Activated CD8-positive, alpha-beta T cell treated with anti-CD3 and anti-CD28 coated beads for 36 hours (primary cell): ENCODE measurements at regions of chr17 and their contacts with region 1.

Region 1: GRCh38 chr17:50087246-50087911 is 7.8 kb upstream of the PDK2 start:
- DNase-seq: peak; percentile 84
- ATAC-seq: peak; percentile 92
- H3K4me3 Mint-ChIP-seq: no peak overlapping the region
- H3K27ac Mint-ChIP-seq: no peak overlapping the region
- H3K4me1 Mint-ChIP-seq: no peaks in the 10 kb centered on the region
- H3K27me3 Mint-ChIP-seq: no peaks in the 10 kb centered on the region
- CTCF ChIP-seq: peak; percentile 100

Region 2: GRCh38 chr17:50020841-50021599 is 66.4 kb before region 1 on chr17:
- CTCF ChIA-PET with region 1: interaction called, 140 read pairs
- POLR2A ChIA-PET with region 1: no interaction called
- intact Hi-C with region 1: loop called (anchors 1 kb)
- DNase-seq: no peak
- ATAC-seq: no peak
- H3K4me3 Mint-ChIP-seq: no peak overlapping the region
- H3K27ac Mint-ChIP-seq: no peak overlapping the region
- H3K4me1 Mint-ChIP-seq: no peaks in the 10 kb centered on the region
- H3K27me3 Mint-ChIP-seq: peaks cover 12% of the 10 kb centered on the region
- CTCF ChIP-seq: no peak

Region 3: DNA sequence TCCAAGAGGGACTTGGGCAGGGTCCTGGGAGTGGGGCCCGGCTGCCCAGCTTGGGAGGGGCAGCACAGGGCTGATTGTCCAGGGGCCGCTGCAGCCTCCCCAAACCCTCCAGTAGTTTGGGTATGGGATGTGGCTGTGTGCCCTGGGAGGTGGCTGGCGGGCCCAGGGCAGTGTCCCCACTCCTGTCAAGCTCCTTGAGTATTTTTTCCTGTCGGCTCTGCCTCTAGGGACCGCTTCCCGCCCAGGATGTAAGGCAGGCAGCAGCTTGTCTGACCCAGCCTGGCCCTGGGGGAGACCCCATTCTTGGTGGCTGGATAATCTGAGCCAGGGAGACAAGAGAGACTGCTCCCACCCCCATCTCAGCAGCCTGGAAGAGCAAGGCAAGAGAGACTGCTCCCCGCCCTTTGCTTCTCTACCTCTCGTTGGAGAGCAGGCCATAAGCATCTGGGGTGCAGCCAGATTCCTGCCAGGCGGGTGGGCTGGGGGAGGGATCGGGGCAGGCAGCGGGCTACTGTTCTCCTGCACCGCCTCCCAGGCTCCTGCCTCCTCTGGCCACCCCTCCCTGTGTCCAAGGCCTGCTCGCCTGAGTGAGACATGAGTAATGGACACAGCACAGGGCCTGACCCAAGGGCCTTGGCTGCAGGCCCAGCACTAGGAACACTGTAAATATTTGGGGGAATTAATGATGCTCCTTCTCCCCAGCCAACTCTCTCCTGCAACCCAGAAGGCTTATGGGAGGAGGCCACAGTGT is 49.9 kb before region 1 on chr17:
- CTCF ChIA-PET with region 1: interaction called, 140 read pairs
- POLR2A ChIA-PET with region 1: interaction called, 3 read pairs
- intact Hi-C with region 1: no loop called
- DNase-seq: no peak
- ATAC-seq: no peak
- H3K4me3 Mint-ChIP-seq: no peak overlapping the region
- H3K27ac Mint-ChIP-seq: no peak overlapping the region
- H3K4me1 Mint-ChIP-seq: no peaks in the 10 kb centered on the region
- H3K27me3 Mint-ChIP-seq: no peaks in the 10 kb centered on the region
- CTCF ChIP-seq: no peak

Region 4: GRCh38 chr17:50102164-50102991 is 15.0 kb after region 1 on chr17:
- CTCF ChIA-PET with region 1: interaction called, 19 read pairs
- POLR2A ChIA-PET with region 1: interaction called, 3 read pairs
- intact Hi-C with region 1: no loop called
- DNase-seq: no peak
- ATAC-seq: no peak
- H3K4me3 Mint-ChIP-seq: no peak overlapping the region
- H3K27ac Mint-ChIP-seq: no peak overlapping the region
- H3K4me1 Mint-ChIP-seq: peaks cover 11% of the 10 kb centered on the region
- H3K27me3 Mint-ChIP-seq: no peaks in the 10 kb centered on the region
- CTCF ChIP-seq: no peak

Region 5: GRCh38 chr17:50161023-50161910 is 73.9 kb after region 1 on chr17:
- CTCF ChIA-PET with region 1: interaction called, 37 read pairs
- POLR2A ChIA-PET with region 1: interaction called, 3 read pairs
- intact Hi-C with region 1: no loop called
- DNase-seq: peak; percentile 96
- ATAC-seq: peak; percentile 92
- H3K4me3 Mint-ChIP-seq: peak overlapping the region; percentile 65
- H3K27ac Mint-ChIP-seq: peak overlapping the region; percentile 97
- H3K4me1 Mint-ChIP-seq: peaks cover 44% of the 10 kb centered on the region
- H3K27me3 Mint-ChIP-seq: no peaks in the 10 kb centered on the region
- CTCF ChIP-seq: peak; percentile 84

Region 6: GRCh38 chr17:50177983-50178834 is 90.8 kb after region 1 on chr17:
- CTCF ChIA-PET with region 1: no interaction called
- POLR2A ChIA-PET with region 1: no interaction called
- intact Hi-C with region 1: no loop called
- DNase-seq: peak; percentile 70
- ATAC-seq: peak; percentile 93
- H3K4me3 Mint-ChIP-seq: no peak overlapping the region
- H3K27ac Mint-ChIP-seq: peak overlapping the region; percentile 2
- H3K4me1 Mint-ChIP-seq: peaks cover 6% of the 10 kb centered on the region
- H3K27me3 Mint-ChIP-seq: no peaks in the 10 kb centered on the region
- CTCF ChIP-seq: peak; percentile 42